Left cardiac atrium (tissue), 4 donors: ENCODE measurements at regions of chr2 and their contacts with region 1.

Region 1: DNA sequence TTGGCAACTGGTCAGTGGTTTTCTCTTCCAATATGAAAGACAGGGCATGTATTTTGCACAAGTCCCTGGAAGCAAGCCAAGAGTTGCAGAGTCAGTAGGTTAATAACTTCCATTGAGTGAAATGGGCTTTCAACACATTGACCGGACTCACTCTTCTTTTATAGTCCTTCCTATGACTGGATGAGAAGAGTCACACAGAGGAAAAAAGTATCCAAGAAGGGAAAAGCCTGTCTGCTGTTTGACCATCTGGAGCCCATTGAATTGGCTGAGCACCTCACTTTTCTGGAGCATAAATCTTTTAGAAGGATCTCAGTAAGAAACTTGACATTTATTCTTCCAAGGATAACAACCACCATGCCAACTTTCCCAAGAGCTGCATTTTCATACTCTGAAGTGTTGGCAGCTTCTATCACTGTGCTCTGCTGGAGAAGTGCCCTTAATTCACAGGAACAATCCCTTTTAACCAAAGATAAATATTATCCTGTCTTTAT is 45.4 kb downstream of the RASGRP3 start:
- DNase-seq: peak; percentile 41
- ATAC-seq: peak; percentile 80 to 83

Region 2: DNA sequence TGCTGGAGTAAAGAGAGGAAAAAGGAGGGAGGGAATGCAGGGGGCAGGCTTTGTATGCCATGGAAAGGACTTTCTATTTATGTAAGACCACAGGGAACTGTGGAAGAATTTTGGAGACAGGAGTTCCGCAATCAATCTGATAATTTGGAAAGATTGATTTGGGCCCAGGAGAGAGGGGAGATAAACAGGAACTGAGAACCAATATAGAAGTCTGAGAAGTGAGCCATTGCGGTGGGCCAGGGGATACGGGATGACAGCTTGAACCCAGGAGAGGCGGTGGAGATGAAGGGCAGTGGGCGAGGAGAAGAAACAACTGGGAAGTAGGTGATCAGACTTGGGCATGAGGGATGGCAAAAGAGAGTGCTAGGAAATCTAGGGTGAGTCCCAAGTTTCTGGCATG is 21.7 kb before region 1 on chr2:
- intact Hi-C with region 1: loop called in 1 of 2 experiments (anchors 2 kb)
- DNase-seq: no peak
- ATAC-seq: no peak

Region 3: GRCh38 chr2:33552758-33553461 is 31.1 kb after region 1 on chr2:
- intact Hi-C with region 1: no loop called
- DNase-seq: no peak
- ATAC-seq: peak in 1 of 2 donors; percentile 57

Region 4: GRCh38 chr2:33607178-33607803 is 85.5 kb after region 1 on chr2:
- intact Hi-C with region 1: no loop called
- DNase-seq: no peak
- ATAC-seq: peak in 1 of 2 donors; percentile 34

Region 5: DNA sequence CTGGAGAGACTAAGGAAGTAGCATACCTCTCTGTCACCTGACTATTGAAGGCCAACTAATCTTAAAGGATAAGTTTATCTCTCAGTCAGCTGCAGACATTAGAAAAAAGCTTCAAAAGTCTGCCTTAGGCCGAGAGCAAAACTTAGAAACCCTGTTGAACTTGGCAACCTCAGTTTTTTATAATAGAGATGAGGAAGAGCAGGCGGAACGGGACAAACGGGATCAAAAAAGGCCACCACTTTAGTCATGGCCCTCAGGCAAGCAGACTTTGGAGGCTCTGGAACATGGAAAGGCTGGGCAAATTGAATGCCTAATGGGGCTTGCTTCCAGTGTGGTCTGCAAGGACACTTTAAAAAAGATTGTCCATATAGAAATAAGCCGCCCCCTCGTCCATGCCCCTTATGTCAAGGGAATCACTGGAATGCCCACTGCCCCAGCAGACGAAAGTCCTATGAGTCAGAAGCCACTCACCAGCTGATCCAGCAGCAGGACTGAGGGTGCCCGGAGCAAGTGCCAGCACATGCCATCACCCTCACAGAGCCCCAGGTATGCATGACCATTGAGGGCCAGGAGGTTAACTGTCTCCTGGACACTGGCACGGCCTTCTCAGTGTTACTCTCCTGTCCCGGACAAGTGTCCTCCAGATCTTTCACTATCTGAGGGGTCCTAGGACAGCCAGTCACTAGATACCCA is 138.7 kb after region 1 on chr2:
- intact Hi-C with region 1: no loop called
- DNase-seq: no peak
- ATAC-seq: no peak

Region 6: GRCh38 chr2:33696234-33696633 is 174.4 kb after region 1 on chr2:
- intact Hi-C with region 1: no loop called
- DNase-seq: no peak
- ATAC-seq: no peak